ENCODE measurements at regions of chr16 and their contacts with region 1.

Region 1: GRCh38 chr16:66406534-66407221 is 20.4 kb upstream of the BEAN1 start:
- DNase-seq: no peak
- H3K4me3 ChIP-seq: peak overlapping the region; percentile 74
- H3K27ac ChIP-seq: peak overlapping the region; percentile 12
- H3K27me3 ChIP-seq: peaks cover 26% of the 10 kb centered on the region
- CTCF ChIP-seq: peak; percentile 85

Region 2: GRCh38 chr16:66304151-66304550 is 102.5 kb before region 1 on chr16:
- CTCF ChIA-PET with region 1: no interaction called
- POLR2A ChIA-PET with region 1: no interaction called
- DNase-seq: no peak
- H3K4me3 ChIP-seq: no peak overlapping the region
- H3K27ac ChIP-seq: no peak overlapping the region
- H3K27me3 ChIP-seq: peaks cover 41% of the 10 kb centered on the region
- CTCF ChIP-seq: no peak

Region 3: DNA sequence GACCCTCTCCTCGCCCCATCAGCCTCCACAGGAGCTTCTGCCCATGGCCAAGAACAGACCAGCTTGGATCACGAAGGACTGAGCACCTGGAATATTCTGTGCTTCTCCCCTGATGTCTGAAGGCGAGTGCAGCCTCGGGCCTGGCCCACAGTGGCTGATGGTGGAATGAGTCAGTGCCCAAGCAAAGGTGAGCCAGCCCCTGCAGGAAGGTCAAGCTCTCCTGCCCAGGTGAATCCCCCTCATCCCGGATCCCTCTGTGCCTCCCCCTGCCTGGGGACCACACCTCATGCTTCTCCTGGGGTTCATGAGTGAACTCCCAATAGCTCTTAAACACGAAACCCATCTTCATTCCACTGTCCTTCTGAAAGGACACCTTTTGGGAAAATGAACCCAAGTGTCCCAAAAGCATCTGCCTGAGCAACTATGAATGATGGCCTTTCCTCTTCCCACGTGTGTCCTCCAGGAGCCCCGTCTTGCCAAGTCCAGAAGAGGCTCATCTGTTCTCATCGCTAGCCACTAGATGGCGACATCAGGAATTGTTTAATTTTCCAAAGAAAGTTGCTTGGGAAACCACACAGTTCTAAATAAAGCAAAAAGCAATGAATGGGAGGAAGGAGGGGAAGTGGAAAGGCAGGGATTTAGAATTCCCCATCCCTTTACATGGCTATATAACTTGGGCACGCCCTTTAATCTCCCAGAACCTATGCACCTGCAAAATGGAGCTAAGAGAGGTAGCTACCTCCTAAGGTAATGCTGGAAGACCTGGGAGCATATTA is 49.3 kb before region 1 on chr16:
- CTCF ChIA-PET with region 1: interaction called, 17 read pairs
- POLR2A ChIA-PET with region 1: no interaction called
- DNase-seq: peak; percentile 62
- H3K4me3 ChIP-seq: no peak overlapping the region
- H3K27ac ChIP-seq: no peak overlapping the region
- H3K27me3 ChIP-seq: peaks cover 45% of the 10 kb centered on the region
- CTCF ChIP-seq: peak; percentile 80

Region 4: DNA sequence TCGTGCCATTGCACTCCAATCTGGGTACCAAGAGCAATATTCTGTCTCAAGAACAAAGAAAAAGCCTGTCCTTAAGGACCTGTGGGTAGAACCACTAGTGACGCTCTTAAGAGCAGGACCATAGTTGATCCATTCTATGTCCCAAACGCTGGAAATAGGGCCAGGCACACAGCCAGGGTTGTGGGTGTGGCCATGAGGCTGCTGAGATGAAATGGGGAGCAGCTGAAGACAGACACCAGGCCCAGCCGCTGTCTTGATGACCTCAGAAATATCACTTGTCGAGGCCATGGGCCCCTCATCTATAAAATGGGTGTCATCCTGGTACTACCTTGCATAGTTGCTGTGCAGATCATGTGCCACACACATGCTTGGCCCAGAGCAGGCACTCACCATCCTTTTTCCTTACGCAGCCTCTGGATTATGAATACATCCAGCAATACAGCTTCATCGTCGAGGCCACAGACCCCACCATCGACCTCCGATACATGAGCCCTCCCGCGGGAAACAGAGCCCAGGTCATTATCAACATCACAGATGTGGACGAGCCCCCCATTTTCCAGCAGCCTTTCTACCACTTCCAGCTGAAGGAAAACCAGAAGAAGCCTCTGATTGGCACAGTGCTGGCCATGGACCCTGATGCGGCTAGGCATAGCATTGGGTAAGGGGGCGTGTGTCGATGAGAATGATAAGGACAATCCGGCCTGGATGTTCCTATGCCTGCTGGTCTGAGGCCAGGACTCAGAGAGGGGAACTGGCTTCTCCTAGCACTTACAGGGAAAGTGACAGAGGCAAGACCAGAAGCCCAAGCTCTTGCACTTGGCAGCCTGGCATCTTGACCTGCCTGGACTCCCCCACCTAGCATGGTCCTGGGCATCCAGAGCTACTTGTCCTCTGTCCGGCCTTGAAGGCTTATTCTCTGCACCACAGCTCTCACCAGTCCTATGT is 14.7 kb before region 1 on chr16:
- CTCF ChIA-PET with region 1: interaction called, 24 read pairs
- POLR2A ChIA-PET with region 1: no interaction called
- DNase-seq: no peak
- H3K4me3 ChIP-seq: no peak overlapping the region
- H3K27ac ChIP-seq: no peak overlapping the region
- H3K27me3 ChIP-seq: peaks cover 35% of the 10 kb centered on the region
- CTCF ChIP-seq: no peak

Region 5: GRCh38 chr16:66474750-66475199 is 68.1 kb after region 1 on chr16:
- CTCF ChIA-PET with region 1: interaction called, 11 read pairs
- POLR2A ChIA-PET with region 1: no interaction called
- DNase-seq: no peak
- H3K4me3 ChIP-seq: no peak overlapping the region
- H3K27ac ChIP-seq: no peak overlapping the region
- H3K27me3 ChIP-seq: peaks cover 16% of the 10 kb centered on the region
- CTCF ChIP-seq: no peak

Region 6: GRCh38 chr16:66483689-66484481 is 77.2 kb after region 1 on chr16:
- CTCF ChIA-PET with region 1: interaction called, 10 read pairs
- POLR2A ChIA-PET with region 1: no interaction called
- DNase-seq: no peak
- H3K4me3 ChIP-seq: no peak overlapping the region
- H3K27ac ChIP-seq: no peak overlapping the region
- H3K27me3 ChIP-seq: no peaks in the 10 kb centered on the region
- CTCF ChIP-seq: peak; percentile 97

Region 7: GRCh38 chr16:66515596-66516510 is 109.2 kb after region 1 on chr16:
- CTCF ChIA-PET with region 1: interaction called, 17 read pairs
- POLR2A ChIA-PET with region 1: no interaction called
- DNase-seq: no peak
- H3K4me3 ChIP-seq: no peak overlapping the region
- H3K27ac ChIP-seq: peak overlapping the region; percentile 39
- H3K27me3 ChIP-seq: no peaks in the 10 kb centered on the region
- CTCF ChIP-seq: peak; percentile 64

Measured in AG04450 (cell line).